ENCODE measurements at regions of chr12 and their contacts with region 1.

Region 1: DNA sequence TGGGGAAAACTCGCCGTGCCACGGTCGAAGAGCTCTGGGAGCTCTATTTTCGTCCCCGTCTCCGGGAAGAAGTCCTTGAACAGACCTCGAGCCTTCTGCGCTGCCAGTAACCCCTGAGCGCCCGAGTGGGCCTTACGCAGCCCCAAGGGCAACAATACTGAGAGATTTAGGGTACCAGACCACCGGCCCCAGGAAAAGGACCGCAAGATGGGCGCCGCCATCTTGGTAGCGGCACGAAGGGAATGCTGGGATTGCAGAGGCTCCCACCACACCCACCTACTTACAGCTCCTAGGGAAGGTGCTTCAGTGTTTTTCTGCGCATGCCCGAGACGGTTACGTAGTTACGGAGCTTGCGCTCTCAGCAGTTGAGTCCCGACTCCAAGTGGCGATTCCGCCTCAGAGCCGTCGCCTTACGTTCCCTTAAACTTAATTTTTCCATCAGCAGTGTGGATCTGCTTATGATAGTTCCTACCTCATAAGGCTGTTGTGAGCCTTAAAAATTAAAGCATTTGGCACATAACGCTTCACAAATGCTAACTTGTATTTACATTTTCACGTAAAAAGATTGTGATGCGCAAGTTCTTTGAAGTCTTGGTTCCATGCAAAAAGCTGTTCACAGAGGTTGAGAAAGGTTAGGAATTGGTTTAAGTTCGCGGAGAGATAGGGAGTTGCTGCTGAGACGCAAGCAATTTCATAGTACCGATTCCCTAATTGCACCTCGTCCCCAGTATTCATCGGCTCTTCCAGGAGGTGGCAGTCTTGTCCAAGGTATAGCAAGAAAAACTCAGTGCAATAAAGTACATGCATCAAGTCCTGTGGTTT is at the start of gene YARS2:
- DNase-seq: peak; percentile 96 to 98 (median 96)
- ATAC-seq: peak; percentile 99
- H3K4me3 ChIP-seq: peak within 1 kb of the TSS; percentile 75
- H3K27ac ChIP-seq: peak within 1 kb of the TSS; percentile 76
- H3K4me1 ChIP-seq: no peaks in the 10 kb centered on the region
- H3K27me3 ChIP-seq: no peaks in the 10 kb centered on the region
- total RNA-seq, gene YARS2: 7.3 to 11.7 (median 9.0) TPM

Region 2: GRCh38 chr12:32501835-32502333 is 254.0 kb before region 1 on chr12:
- intact Hi-C with region 1: no loop called
- DNase-seq: no peak
- ATAC-seq: peak; percentile 74 to 80
- H3K4me3 ChIP-seq: peak overlapping the region; percentile 43
- H3K27ac ChIP-seq: peak overlapping the region; percentile 77
- H3K4me1 ChIP-seq: peaks cover 11% of the 10 kb centered on the region
- H3K27me3 ChIP-seq: no peaks in the 10 kb centered on the region

Region 3: GRCh38 chr12:32870716-32871115 is 114.9 kb after region 1 on chr12:
- intact Hi-C with region 1: no loop called
- DNase-seq: no peak
- ATAC-seq: no peak
- H3K4me3 ChIP-seq: no peak overlapping the region
- H3K27ac ChIP-seq: no peak overlapping the region
- H3K4me1 ChIP-seq: no peaks in the 10 kb centered on the region
- H3K27me3 ChIP-seq: no peaks in the 10 kb centered on the region

Region 4: GRCh38 chr12:32918890-32919801 is 163.3 kb after region 1 on chr12:
- intact Hi-C with region 1: loop called (anchors 2 to 5 kb)
- DNase-seq: no peak
- ATAC-seq: peak; percentile 48 to 73
- H3K4me3 ChIP-seq: no peak overlapping the region
- H3K27ac ChIP-seq: no peak overlapping the region
- H3K4me1 ChIP-seq: no peaks in the 10 kb centered on the region
- H3K27me3 ChIP-seq: no peaks in the 10 kb centered on the region

Region 5: GRCh38 chr12:34022079-34022830 is 1266.4 kb after region 1 on chr12 and contains the start of gene ALG10:
- intact Hi-C with region 1: loop called in 3 of 4 experiments (anchors 5 to 10 kb)
- DNase-seq: peak; percentile 96 to 98 (median 97)
- ATAC-seq: peak; percentile 100
- H3K4me3 ChIP-seq: peak within 1 kb of the TSS; percentile 65
- H3K27ac ChIP-seq: peak within 1 kb of the TSS; percentile 83
- H3K4me1 ChIP-seq: peaks cover 2% of the 10 kb centered on the region
- H3K27me3 ChIP-seq: no peaks in the 10 kb centered on the region
- total RNA-seq, gene ALG10: 4.7 to 5.6 (median 5.0) TPM

Measured in right cardiac atrium (tissue), 5 donors.